IMR-90 (cell line): ENCODE measurements at regions of chr11 and their contacts with region 1.

Region 1: DNA sequence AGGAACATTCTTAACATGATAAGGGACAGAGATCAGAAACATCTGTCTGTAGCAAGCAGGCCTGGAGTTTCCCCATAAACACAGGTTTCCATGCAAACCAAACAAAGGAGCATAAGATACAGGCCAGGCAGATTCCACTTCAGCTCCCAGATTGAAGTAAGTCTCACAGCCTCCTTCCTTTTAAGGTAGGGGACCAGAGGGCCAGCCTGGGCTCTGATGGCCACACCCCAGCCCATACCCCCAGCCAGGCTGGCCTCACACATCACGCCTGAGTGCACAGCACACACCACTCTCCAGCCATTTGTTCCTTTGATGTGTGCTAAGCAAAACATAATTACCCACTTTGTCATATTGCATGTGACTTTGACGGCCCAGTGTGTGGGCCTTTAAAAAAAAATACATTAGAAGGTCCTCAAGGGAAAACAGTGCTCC is 518.7 kb downstream of the NTM start:
- DNase-seq: peak; percentile 95
- ATAC-seq: peak; percentile 60
- H3K4me3 ChIP-seq: no peak overlapping the region
- H3K27ac ChIP-seq: peak overlapping the region; percentile 68
- H3K4me1 ChIP-seq: peaks cover 19% of the 10 kb centered on the region
- H3K27me3 ChIP-seq: no peaks in the 10 kb centered on the region
- CTCF ChIP-seq: no peak
- POLR2A ChIP-seq: no peak
- RAD21 ChIP-seq: no peak

Region 2: GRCh38 chr11:130916238-130916855 is 972.8 kb before region 1 on chr11 and contains the start of gene SNX19:
- CTCF ChIA-PET with region 1: no interaction called
- POLR2A ChIA-PET with region 1: no interaction called
- dilution Hi-C with region 1: no loop called
- in situ Hi-C with region 1: loop called (anchors 25 kb)
- intact Hi-C with region 1: no loop called
- DNase-seq: peak; percentile 88
- ATAC-seq: peak; percentile 99
- H3K4me3 ChIP-seq: peak within 1 kb of the TSS; percentile 80
- H3K27ac ChIP-seq: peak within 1 kb of the TSS; percentile 81
- H3K4me1 ChIP-seq: peaks cover 8% of the 10 kb centered on the region; the same call in 1 of the 2 replicates
- H3K27me3 ChIP-seq: no peaks in the 10 kb centered on the region
- CTCF ChIP-seq: peak; percentile 98
- POLR2A ChIP-seq: peak; percentile 94
- RAD21 ChIP-seq: peak; percentile 63
- total RNA-seq, gene SNX19: 90.0 and 113 TPM in 2 replicates

Region 3: DNA sequence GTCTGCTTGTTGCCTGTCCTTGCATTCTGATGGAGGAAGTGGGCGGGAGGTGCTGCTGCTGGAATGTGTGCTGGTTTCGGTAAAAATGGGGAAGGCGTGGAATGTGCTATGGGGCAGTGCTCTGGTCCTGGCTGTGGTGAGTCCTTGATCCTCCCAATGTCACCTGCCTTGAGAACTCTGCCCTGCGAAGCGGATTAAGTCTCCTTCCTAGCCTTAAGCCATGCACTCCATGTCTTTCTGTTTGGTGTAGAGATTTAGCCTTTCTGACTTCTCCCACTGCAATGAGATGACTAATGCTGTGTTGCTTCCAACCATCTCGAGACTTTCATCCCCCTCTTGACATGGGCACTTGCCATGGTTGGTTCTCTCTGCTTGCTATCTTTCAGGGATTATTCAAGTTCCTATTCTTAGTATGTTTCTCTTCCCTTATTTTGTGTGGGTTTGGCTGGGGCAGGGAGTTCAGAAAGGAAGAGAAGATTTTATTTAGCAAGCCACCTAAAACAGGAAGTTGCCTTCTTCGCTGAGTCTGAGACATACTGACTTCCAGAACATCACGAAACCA is 169.1 kb after region 1 on chr11:
- CTCF ChIA-PET with region 1: no interaction called
- POLR2A ChIA-PET with region 1: no interaction called
- dilution Hi-C with region 1: no loop called
- in situ Hi-C with region 1: loop called (anchors 10 kb)
- intact Hi-C with region 1: no loop called
- DNase-seq: peak; percentile 61
- ATAC-seq: no peak; the same call in 1 of the 2 replicates
- H3K4me3 ChIP-seq: no peak overlapping the region
- H3K27ac ChIP-seq: peak overlapping the region; percentile 54
- H3K4me1 ChIP-seq: peaks cover 40% of the 10 kb centered on the region
- H3K27me3 ChIP-seq: no peaks in the 10 kb centered on the region
- CTCF ChIP-seq: no peak
- POLR2A ChIP-seq: no peak
- RAD21 ChIP-seq: no peak